Activated CD4-positive, alpha-beta T cell treated with anti-CD3 and anti-CD28 coated beads for 36 hours (primary cell): ENCODE measurements at regions of chr3 and their contacts with region 1.

Region 1: GRCh38 chr3:43621656-43622432 is at the start of gene ANO10:
- DNase-seq: peak; percentile 98
- ATAC-seq: peak; percentile 95
- H3K4me3 Mint-ChIP-seq: peak within 1 kb of the TSS; percentile 83
- H3K27ac Mint-ChIP-seq: peak within 1 kb of the TSS; percentile 87
- H3K4me1 Mint-ChIP-seq: peaks cover 12% of the 10 kb centered on the region
- H3K27me3 Mint-ChIP-seq: no peaks in the 10 kb centered on the region
- total RNA-seq, gene ANO10: 6.9 to 9.4 TPM

Region 2: GRCh38 chr3:43389388-43390254 is 232.2 kb before region 1 on chr3:
- CTCF ChIA-PET with region 1: no interaction called
- POLR2A ChIA-PET with region 1: no interaction called
- intact Hi-C with region 1: loop called in 1 of 2 experiments (anchors 5 kb)
- DNase-seq: peak; percentile 81
- ATAC-seq: peak; percentile 94
- H3K4me3 Mint-ChIP-seq: peak overlapping the region; percentile 7
- H3K27ac Mint-ChIP-seq: peak overlapping the region; percentile 77
- H3K4me1 Mint-ChIP-seq: peaks cover 47% of the 10 kb centered on the region
- H3K27me3 Mint-ChIP-seq: no peaks in the 10 kb centered on the region

Region 3: DNA sequence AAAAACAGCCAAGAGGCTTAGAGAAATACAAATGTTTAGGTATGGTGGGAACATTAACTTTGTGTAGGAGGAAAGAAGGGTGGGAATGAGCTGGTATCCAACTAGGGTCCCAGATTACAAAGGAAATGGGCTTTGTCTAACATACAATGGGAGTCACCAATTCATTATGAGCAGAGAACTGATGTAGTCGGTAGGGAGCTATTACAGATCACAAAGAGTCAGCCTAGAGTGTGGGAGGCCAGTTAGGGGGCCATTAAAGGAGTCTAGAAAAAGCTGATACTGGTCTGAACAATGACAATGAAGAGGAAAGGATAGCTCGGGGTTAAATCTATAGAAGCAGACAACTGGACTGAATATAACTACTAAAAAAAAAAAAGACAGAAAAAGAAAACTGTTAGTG is 15.6 kb before region 1 on chr3:
- CTCF ChIA-PET with region 1: no interaction called
- POLR2A ChIA-PET with region 1: no interaction called
- intact Hi-C with region 1: no loop called
- DNase-seq: no peak
- ATAC-seq: no peak
- H3K4me3 Mint-ChIP-seq: no peak overlapping the region
- H3K27ac Mint-ChIP-seq: no peak overlapping the region
- H3K4me1 Mint-ChIP-seq: no peaks in the 10 kb centered on the region
- H3K27me3 Mint-ChIP-seq: no peaks in the 10 kb centered on the region

Region 4: GRCh38 chr3:43670635-43671522 is 49.0 kb after region 1 on chr3:
- CTCF ChIA-PET with region 1: no interaction called
- POLR2A ChIA-PET with region 1: no interaction called
- intact Hi-C with region 1: no loop called
- DNase-seq: no peak
- ATAC-seq: no peak
- H3K4me3 Mint-ChIP-seq: no peak overlapping the region
- H3K27ac Mint-ChIP-seq: no peak overlapping the region
- H3K4me1 Mint-ChIP-seq: no peaks in the 10 kb centered on the region
- H3K27me3 Mint-ChIP-seq: peaks cover 7% of the 10 kb centered on the region

Region 5: DNA sequence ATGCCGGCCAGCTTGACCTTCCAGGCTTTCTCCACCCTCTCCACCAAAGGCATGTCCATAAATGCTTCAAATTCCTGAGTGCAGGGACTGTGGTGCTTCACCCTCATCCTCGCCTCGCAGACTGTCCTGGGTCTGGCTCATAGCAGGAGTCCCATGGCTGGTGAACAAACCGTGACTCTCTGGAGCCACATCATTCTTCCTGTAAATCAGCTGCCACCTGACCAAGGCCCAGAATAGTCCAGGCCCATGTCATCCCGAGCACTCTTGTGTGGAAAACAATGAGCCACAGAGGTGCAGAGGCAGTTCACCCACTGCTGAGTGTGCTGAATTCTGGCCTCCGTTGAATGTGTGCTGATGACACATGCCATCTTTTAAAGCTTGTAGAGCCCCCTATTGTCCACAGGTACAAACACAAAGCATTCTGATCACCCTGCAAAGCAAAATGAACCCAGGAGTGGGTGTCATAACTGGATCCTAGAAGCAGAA is 137.5 kb after region 1 on chr3:
- CTCF ChIA-PET with region 1: no interaction called
- POLR2A ChIA-PET with region 1: no interaction called
- intact Hi-C with region 1: loop called in 1 of 2 experiments (anchors 5 kb)
- DNase-seq: peak; percentile 20
- ATAC-seq: peak; percentile 62
- H3K4me3 Mint-ChIP-seq: no peak overlapping the region
- H3K27ac Mint-ChIP-seq: no peak overlapping the region
- H3K4me1 Mint-ChIP-seq: peaks cover 36% of the 10 kb centered on the region
- H3K27me3 Mint-ChIP-seq: no peaks in the 10 kb centered on the region

Region 6: GRCh38 chr3:44861412-44862220 is 1239.8 kb after region 1 on chr3 and contains the start of gene TMEM42:
- CTCF ChIA-PET with region 1: no interaction called
- POLR2A ChIA-PET with region 1: no interaction called
- intact Hi-C with region 1: loop called in 1 of 2 experiments (anchors 10 kb)
- DNase-seq: peak; percentile 91
- ATAC-seq: peak; percentile 96
- H3K4me3 Mint-ChIP-seq: peak within 1 kb of the TSS; percentile 78
- H3K27ac Mint-ChIP-seq: peak within 1 kb of the TSS; percentile 73
- H3K4me1 Mint-ChIP-seq: peaks cover 34% of the 10 kb centered on the region
- H3K27me3 Mint-ChIP-seq: no peaks in the 10 kb centered on the region
- total RNA-seq, gene TMEM42: 7.6 to 10.9 TPM